OCI-LY7 (cell line): ENCODE measurements at regions of chr11 and their contacts with region 1.

Region 1: GRCh38 chr11:128630367-128631230 is 43.2 kb upstream of the ETS1 start:
- DNase-seq: peak; percentile 95
- H3K4me3 ChIP-seq: peak overlapping the region; percentile 3
- H3K27ac ChIP-seq: peak overlapping the region; percentile 97
- H3K4me1 ChIP-seq: peaks cover 71% of the 10 kb centered on the region
- CTCF ChIP-seq: peak; percentile 99

Region 2: DNA sequence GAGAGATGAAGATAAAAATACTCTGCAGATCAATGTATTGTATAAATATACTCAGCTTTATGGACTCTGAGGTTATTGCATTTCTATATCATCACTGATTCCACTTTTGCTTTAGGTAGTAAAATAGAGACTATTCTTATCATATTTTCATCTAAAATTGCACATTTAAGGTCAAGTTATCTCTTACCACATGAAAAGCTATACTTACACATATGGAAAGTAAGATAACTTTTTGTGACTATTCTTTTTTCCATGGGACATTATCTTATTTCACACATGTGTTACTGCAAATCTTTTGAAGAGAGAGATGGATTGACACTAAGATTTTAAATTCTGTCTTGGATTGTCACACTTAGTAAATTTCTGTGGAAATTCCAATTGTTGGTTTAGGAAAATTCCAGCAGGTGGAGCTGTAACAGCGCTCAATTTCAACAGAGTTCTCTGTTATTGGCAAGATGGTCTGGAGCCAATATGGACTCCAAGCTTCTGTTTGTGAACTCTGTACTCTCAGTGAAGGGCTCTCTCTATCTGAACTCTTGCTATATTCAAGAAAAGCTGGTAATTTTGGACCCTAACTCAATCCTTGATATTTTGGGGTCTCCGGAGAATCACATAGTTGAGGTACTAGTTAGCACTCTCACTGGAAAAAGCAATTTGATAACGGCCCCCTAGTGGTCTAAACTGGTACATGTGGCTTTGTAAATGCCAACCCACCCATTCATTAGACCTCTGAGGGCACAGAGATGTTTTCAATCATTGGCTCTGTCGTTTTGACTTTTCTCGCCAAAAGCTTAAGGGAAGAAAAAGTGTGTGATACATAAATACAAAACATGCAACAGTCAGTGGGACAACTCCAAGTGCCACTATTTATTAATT is 472.9 kb before region 1 on chr11:
- CTCF ChIA-PET with region 1: interaction called, 6 read pairs
- POLR2A ChIA-PET with region 1: interaction called, 4 read pairs
- intact Hi-C with region 1: loop called (anchors 5 kb)
- DNase-seq: peak; percentile 80
- H3K4me3 ChIP-seq: no peak overlapping the region
- H3K27ac ChIP-seq: no peak overlapping the region
- H3K4me1 ChIP-seq: no peaks in the 10 kb centered on the region
- CTCF ChIP-seq: peak; percentile 100

Region 3: DNA sequence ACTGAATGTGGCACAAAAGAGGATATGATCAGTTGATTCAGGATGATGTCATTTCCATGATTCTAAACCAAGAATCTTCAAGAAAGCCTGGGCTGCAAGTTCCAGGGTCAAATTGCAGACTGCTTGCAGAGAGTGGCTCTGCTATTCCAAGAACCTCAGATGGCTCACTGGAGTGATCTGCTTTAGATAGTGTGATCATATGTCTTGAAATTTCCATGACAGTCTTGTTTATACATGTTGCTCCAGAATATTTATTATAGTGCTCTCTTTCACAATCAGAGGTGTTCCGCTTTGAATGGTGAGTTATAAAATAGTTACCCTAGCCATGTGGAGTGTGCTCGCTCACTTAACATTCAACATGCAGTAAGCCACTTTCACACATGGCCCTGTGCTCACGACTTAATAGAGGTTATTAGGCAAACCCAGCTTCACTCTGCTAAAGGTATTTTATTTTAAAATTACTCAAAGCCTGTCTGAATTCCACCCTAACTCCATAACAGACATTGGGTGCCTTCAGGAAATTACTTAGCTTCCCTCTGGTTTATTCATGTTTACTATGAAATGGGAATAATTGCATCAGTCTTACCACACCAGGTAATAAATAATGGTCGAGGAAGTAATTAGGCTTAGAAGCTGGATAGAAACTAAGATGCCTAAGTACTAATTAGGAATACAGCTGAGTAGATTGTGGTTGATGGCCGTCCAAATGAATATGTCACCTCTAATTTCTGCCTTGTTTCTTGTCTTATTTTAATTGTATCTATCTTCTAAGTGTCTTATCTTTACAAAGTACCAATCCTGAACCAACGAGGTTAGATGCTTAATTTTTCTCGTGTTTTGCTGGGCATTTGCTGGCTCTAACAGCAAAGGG is 231.1 kb before region 1 on chr11:
- CTCF ChIA-PET with region 1: no interaction called
- POLR2A ChIA-PET with region 1: no interaction called
- intact Hi-C with region 1: loop called (anchors 5 kb)
- DNase-seq: peak; percentile 45
- H3K4me3 ChIP-seq: no peak overlapping the region
- H3K27ac ChIP-seq: peak overlapping the region; percentile 1
- H3K4me1 ChIP-seq: peaks cover 15% of the 10 kb centered on the region
- CTCF ChIP-seq: no peak

Region 4: DNA sequence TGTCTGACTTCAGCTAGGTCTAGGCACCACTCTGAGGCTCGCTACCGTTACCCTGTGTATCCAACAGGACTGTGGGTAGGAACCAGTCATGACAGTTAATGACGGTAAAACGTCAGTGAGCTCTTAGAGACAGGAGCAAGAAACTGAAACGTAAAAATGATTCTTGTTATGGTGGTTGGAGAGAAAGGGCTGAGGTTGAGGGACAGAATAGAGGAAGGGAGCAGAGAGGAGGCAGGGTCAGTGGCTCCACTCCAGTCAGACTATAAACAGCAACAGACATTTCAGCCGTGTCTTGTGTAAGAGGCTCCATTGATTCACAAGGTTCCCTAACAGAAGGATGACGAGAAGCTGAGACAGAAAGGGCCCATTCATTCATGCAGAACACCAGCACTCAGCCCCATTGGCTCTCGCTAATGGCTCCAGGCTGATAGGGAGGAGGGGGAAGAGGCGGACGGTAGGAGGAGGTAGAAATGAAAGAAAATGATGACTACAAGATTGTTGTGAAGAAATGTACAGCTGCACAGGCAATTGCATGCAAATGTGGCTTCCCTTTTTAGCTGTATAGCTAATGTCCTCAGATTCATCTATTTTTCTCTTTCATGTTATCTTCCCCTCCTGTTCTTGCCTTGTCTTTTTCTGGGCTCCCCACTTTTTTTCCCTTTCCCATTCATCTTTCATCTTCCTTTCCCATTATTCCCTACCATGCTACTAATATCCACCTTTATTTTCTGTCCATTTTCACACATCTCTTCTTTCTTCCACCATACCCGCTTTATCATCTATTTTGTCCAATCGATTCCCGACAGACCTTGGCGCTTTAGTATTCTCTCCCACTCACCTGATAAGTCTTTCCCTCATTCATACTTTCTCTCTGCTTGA is 77.6 kb before region 1 on chr11:
- CTCF ChIA-PET with region 1: interaction called, 37 read pairs
- POLR2A ChIA-PET with region 1: interaction called, 159 read pairs
- intact Hi-C with region 1: loop called (anchors 1 kb)
- DNase-seq: peak; percentile 97
- H3K4me3 ChIP-seq: peak overlapping the region; percentile 61
- H3K27ac ChIP-seq: peak overlapping the region; percentile 97
- H3K4me1 ChIP-seq: peaks cover 80% of the 10 kb centered on the region
- CTCF ChIP-seq: no peak

Region 5: GRCh38 chr11:128684549-128685401 is 54.2 kb after region 1 on chr11:
- CTCF ChIA-PET with region 1: no interaction called
- POLR2A ChIA-PET with region 1: no interaction called
- intact Hi-C with region 1: no loop called
- DNase-seq: no peak
- H3K4me3 ChIP-seq: no peak overlapping the region
- H3K27ac ChIP-seq: no peak overlapping the region
- H3K4me1 ChIP-seq: peaks cover 6% of the 10 kb centered on the region
- CTCF ChIP-seq: no peak

Region 6: GRCh38 chr11:128695539-128696221 is 65.1 kb after region 1 on chr11:
- CTCF ChIA-PET with region 1: interaction called, 3 read pairs
- POLR2A ChIA-PET with region 1: interaction called, 4 read pairs
- intact Hi-C with region 1: loop called (anchors 5 kb)
- DNase-seq: peak; percentile 78
- H3K4me3 ChIP-seq: peak overlapping the region; percentile 79
- H3K27ac ChIP-seq: peak overlapping the region; percentile 66
- H3K4me1 ChIP-seq: peaks cover 50% of the 10 kb centered on the region
- CTCF ChIP-seq: no peak

Region 7: GRCh38 chr11:128848815-128849455 is 218.3 kb after region 1 on chr11:
- CTCF ChIA-PET with region 1: interaction called, 4 read pairs
- POLR2A ChIA-PET with region 1: interaction called, 5 read pairs
- intact Hi-C with region 1: loop called (anchors 1 kb)
- DNase-seq: peak; percentile 79
- H3K4me3 ChIP-seq: no peak overlapping the region
- H3K27ac ChIP-seq: peak overlapping the region; percentile 23
- H3K4me1 ChIP-seq: peaks cover 29% of the 10 kb centered on the region
- CTCF ChIP-seq: peak; percentile 98